ENCODE measurements at regions of chr7 and their contacts with region 1.

Region 1: DNA sequence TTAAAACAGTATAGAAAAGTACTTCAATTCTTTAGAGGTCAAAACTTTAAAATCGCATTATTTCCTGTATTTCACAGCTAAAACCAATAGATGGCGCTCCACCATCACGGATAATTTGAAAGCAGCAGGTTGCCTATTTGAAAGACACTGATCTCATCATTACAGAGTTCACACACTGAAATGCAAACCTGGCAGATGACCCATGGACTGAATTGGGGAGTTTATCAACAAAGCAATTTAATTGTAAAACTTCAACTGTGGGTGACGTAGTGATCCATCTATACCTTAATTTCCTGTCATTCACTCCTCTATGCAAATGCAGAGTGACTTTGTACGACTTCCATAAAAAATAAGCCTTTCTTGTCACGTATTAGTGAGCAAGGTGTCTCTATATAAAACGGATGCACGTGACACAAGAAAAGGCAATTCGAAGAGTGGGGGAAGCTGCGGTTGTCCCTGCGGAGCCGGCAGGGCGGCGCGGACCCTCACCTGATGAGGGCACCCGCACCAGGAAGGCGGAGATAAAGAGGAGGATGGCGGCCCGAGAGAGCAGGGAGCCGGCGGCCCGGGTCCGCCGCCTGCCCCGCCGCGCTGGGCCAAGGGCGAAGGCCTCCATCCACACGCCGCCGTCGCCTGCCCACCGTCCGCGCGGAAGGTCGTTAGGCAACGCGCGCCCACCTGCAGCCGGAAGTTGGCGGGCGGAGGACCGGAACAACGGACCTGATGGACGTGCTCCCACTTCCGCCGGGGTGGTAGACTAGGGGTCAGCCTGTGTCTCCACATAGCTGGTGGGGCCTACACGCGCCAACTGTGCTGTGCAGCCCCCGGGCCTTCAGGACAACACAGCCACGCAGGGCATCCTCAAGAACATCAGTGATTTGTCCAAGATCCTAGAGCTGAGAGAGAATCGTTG is at the start of gene ZPBP:
- DNase-seq: peak; percentile 67
- H3K4me3 Mint-ChIP-seq: peak within 1 kb of the TSS; percentile 76
- H3K27ac Mint-ChIP-seq: peak within 1 kb of the TSS; percentile 81
- H3K4me1 Mint-ChIP-seq: peaks cover 7% of the 10 kb centered on the region
- H3K27me3 Mint-ChIP-seq: no peaks in the 10 kb centered on the region
- total RNA-seq, gene ZPBP: not detected

Region 2: DNA sequence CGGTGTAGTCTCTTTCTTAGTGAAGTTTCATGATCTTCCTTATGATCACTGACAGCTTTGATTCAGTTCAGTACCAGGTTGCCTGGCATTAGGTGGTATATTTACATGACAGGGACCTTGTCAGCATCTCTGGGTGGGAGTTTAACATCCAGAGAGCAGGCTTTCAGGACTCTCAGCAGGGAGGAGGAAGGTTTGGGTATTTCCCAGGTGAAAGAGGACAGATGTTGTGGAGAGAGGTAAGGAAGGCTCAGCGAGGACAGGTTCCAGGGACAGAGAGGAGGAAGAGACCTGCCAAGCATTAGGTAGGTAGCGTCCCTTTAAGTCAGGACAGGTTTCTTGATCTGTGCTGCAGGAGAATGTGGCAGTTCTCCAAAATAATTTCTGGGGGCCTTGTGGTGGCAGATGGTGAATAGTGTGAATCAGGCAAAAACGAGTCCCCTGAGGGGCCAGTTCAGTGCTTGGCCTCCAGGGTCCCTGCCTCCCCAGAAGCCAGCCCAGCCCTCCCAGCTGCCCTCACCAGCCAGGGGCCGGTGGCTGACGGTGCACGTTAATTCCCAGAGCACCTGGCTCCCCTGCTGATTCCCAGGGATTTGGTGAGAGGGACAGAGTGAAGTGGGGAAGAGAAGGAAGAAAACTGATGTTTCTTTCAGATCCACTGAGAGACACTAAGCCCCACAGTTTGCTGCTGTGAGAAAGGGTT is 237.4 kb before region 1 on chr7:
- CTCF ChIA-PET with region 1: no interaction called
- intact Hi-C with region 1: no loop called
- DNase-seq: no peak
- H3K4me3 Mint-ChIP-seq: no peak overlapping the region
- H3K27ac Mint-ChIP-seq: no peak overlapping the region
- H3K4me1 Mint-ChIP-seq: no peaks in the 10 kb centered on the region
- H3K27me3 Mint-ChIP-seq: no peaks in the 10 kb centered on the region

Region 3: DNA sequence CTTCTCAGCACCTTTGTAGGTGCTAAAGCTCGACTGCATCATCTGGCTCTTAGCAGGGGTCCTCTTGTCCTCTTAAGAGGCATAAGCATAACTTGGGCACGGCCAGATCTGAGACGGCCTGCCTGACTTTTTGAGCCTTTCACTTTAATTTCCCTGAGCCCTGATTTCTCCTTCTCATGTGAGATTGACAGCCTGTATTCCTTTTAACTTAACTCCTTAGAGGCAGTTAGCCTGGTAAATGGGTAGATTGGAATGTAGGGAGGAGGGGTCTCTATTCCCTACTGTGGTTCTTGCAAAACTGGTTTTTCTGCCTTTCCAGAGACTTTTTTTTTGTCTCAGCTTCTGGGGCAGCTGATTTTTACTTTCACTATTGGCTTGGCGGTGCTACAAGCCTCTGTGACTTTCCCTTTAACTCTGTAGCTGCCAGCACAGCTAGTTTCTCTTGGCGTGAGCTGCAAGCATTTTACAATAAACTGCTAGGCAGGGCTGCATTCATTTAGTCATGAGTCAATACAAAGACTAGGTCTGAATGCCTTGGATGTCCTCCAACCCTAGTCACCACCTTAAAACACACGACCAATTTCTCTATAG is 23.8 kb before region 1 on chr7:
- CTCF ChIA-PET with region 1: interaction called, 18 read pairs
- intact Hi-C with region 1: no loop called
- DNase-seq: peak; percentile 52
- H3K4me3 Mint-ChIP-seq: peak overlapping the region; percentile 81
- H3K27ac Mint-ChIP-seq: peak overlapping the region; percentile 70
- H3K4me1 Mint-ChIP-seq: peaks cover 21% of the 10 kb centered on the region
- H3K27me3 Mint-ChIP-seq: no peaks in the 10 kb centered on the region

Region 4: GRCh38 chr7:50266635-50267386 is 174.0 kb after region 1 on chr7:
- CTCF ChIA-PET with region 1: no interaction called
- intact Hi-C with region 1: loop called (anchors 1 kb)
- DNase-seq: peak; percentile 84
- H3K4me3 Mint-ChIP-seq: peak overlapping the region; percentile 55
- H3K27ac Mint-ChIP-seq: peak overlapping the region; percentile 94
- H3K4me1 Mint-ChIP-seq: peaks cover 91% of the 10 kb centered on the region
- H3K27me3 Mint-ChIP-seq: no peaks in the 10 kb centered on the region

Region 5: DNA sequence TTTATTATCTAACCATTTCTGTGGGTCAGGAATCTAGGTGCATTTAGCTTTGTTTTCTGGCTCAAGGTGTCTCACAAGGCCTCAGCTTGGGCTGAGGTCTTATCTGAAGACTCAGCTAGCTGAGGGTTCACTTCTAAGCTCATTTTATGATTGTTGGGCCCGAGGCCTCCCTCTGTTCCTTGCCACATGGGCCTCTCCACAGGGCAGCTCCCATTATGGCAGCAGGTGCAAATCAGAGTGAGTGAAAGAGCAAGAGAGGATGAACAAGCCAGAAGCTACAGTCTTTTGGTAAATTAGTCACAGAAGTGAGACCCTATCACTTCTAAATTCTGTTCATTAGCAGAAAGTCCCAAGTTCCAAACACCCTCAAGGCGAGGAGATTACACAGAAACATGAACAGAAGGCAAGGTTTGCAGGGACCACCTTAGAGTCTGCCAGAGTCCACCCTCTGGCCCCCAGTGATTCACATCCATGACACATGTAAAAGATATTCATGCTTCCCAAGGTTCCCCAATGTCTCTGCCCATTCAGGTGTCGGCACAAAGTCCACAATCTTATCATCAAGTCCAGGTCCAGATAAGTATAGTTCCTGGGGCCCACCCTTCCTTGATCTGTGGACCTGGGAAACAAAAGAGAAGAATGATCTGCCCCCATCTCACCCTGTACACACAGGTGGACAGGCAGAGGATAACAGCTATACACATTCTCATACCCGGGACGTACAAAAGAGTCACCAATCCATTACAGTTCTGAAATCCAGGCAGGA is 333.6 kb after region 1 on chr7:
- CTCF ChIA-PET with region 1: interaction called, 25 read pairs
- intact Hi-C with region 1: no loop called
- DNase-seq: no peak
- H3K4me3 Mint-ChIP-seq: no peak overlapping the region
- H3K27ac Mint-ChIP-seq: no peak overlapping the region
- H3K4me1 Mint-ChIP-seq: no peaks in the 10 kb centered on the region
- H3K27me3 Mint-ChIP-seq: no peaks in the 10 kb centered on the region

Region 6: GRCh38 chr7:50664461-50664922 is 571.7 kb after region 1 on chr7:
- CTCF ChIA-PET with region 1: no interaction called
- intact Hi-C with region 1: loop called (anchors 2 kb)
- DNase-seq: peak; percentile 47
- H3K4me3 Mint-ChIP-seq: no peak overlapping the region
- H3K27ac Mint-ChIP-seq: no peak overlapping the region
- H3K4me1 Mint-ChIP-seq: peaks cover 62% of the 10 kb centered on the region
- H3K27me3 Mint-ChIP-seq: no peaks in the 10 kb centered on the region

Region 7: DNA sequence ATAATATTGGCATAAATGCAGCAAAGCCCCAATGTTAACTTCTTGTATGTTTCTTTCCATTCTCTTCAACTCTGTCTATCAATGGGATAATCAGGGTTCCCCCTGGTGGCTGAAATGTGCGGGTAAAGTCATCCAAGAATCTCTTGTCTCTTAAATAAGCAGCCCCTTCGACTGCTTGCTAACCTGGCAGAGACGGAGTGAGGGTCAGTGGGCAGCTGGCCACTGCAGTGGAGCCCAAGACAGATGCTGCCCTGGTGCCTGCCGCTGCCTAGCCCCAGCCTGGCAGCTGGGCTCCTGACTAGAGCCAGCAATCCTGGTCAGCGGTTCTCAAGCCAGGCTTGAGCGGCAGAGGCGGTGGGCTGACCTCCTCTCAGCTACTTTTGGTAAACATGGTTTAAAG is 974.9 kb after region 1 on chr7:
- CTCF ChIA-PET with region 1: interaction called, 4 read pairs
- intact Hi-C with region 1: loop called (anchors 2 kb)
- DNase-seq: peak; percentile 75
- H3K4me3 Mint-ChIP-seq: no peak overlapping the region
- H3K27ac Mint-ChIP-seq: no peak overlapping the region
- H3K4me1 Mint-ChIP-seq: no peaks in the 10 kb centered on the region
- H3K27me3 Mint-ChIP-seq: no peaks in the 10 kb centered on the region

Region 8: GRCh38 chr7:51162724-51163329 is 1070.0 kb after region 1 on chr7:
- CTCF ChIA-PET with region 1: interaction called, 10 read pairs
- intact Hi-C with region 1: loop called (anchors 1 kb)
- DNase-seq: peak; percentile 92
- H3K4me3 Mint-ChIP-seq: no peak overlapping the region
- H3K27ac Mint-ChIP-seq: no peak overlapping the region
- H3K4me1 Mint-ChIP-seq: peaks cover 9% of the 10 kb centered on the region
- H3K27me3 Mint-ChIP-seq: peaks cover 12% of the 10 kb centered on the region

Measured in activated naive CD4-positive, alpha-beta T cell treated with anti-CD3 and anti-CD28 coated beads for 36 hours (primary cell).